ENCODE measurements at regions of chr6 and their contacts with region 1.

Region 1: DNA sequence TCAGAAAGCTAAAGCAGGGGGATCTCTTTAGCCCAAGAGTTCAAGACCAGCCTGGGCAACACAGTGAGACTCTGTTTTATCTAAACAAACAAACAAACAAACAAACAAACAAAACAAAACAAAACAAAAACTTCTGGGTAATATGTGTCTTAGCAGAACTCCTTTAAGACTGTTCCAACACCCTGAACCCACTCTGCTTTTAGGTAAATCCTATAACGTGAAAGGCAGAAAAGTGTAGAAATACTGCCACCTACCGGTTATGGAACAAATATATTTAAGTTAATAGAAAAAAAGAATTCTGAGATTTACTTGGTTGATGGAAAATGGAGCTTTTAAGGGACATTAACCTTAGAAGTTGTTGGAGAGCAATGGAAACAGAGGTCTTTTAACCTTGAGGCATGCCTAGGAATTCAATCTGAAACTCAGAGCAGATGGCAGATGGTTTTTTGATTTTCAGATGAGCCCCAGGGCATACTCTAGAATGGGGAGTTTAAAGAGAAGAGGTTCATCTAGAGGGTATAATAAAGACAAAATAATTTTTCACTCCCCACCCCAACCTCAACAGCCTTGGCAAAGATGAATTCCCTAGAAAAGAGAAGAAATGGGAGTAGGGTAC is 38.5 kb downstream of the SOD2 start:
- DNase-seq: peak; percentile 60 to 82 (median 78)
- H3K4me3 ChIP-seq: no peak overlapping the region
- H3K27ac ChIP-seq: no peak overlapping the region
- H3K4me1 ChIP-seq: no peaks in the 10 kb centered on the region
- H3K27me3 ChIP-seq: no peaks in the 10 kb centered on the region

Region 2: DNA sequence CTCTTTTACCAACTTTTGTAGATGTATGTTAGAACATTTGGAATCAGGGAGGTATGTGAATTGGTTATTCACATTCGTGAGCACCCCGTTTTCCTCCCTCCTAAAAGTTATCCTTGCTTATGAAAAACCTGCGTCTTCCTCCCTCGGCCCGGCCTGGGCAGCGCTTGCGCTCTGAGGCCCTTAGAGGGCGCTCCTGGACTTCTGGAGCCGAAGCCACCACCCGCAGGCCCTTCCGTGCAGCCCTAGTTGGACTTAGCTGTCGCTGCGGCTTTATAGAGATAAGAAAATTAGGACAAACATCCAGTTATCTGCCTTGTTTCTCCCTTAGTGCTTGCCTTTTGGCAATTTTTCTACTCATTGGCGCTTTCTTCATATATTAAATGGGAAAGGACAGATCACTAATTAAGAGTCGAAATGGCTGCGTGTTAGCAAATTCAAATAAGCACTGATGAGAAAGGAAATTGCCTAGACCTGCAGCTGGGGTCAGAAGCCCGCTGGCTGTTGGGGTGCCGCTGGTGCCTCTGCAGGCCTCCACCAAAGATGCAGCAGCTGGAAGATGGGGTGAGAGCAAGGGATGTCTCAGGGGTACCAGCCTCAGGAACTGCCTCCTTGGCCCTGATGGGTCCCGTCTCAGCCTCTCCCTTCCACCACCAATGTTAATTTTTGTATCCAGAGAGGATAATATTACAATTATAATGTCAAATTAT is 480.2 kb before region 1 on chr6:
- CTCF ChIA-PET with region 1: interaction called, 16 read pairs
- POLR2A ChIA-PET with region 1: no interaction called
- DNase-seq: peak; percentile 73 to 82 (median 81)
- H3K4me3 ChIP-seq: peak overlapping the region in 3 of 7 experiments; percentile 16 to 56 (median 56)
- H3K27ac ChIP-seq: no peak overlapping the region
- H3K4me1 ChIP-seq: peaks cover 0 to 15% (median 8%) of the 10 kb centered on the region in 4 experiments
- H3K27me3 ChIP-seq: peaks cover 19 to 58% (median 29%) of the 10 kb centered on the region in 5 experiments

Region 3: DNA sequence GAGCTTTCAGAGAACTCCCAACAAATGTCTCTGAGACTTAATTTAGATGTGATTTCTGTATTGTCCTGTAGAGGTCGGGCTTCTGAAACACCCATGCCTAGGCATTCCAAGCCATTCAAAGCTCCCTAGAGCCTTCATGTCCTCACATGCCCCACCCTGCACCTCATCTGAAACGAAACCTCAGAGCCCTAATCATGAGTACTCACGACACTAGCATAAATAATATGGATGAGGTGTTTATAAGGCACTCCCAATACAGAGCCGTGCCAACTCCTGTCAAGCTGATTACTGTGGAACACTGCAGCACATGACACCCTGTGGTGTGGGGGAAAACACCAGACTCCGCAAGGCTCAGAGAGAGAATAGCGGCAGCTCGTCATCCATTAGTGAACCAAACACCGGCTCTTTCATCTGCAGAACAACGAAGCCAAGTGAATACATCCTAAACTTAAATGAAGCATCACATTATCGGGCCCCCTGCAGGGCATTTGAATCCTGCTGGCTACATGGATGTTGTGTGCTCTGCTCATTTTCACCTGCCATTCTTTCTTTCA is 401.6 kb before region 1 on chr6:
- CTCF ChIA-PET with region 1: interaction called, 11 read pairs
- POLR2A ChIA-PET with region 1: no interaction called
- DNase-seq: peak; percentile 38 to 68 (median 62)
- H3K4me3 ChIP-seq: peak overlapping the region in 1 of 7 experiments; percentile 47
- H3K27ac ChIP-seq: no peak overlapping the region
- H3K4me1 ChIP-seq: peaks cover 0 to 2% (median 0%) of the 10 kb centered on the region in 4 experiments
- H3K27me3 ChIP-seq: no peaks in the 10 kb centered on the region

Region 4: DNA sequence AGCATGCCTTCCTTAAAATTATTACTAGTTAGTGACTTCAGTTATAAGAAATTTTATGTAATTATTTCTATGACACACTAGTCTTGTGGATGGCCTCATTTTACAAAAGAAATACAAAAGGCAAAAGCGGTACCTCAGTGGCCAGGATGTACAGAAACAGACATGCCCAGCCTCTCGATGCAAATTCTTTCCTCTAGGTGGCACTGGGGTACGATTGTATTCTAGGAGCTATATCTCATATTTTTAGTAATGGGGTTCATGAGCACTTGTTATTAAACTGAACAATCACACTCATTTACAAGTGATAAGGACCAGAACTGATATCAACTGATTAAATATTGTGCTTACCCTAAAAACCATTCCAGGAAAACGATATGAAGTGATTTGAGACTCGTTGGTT is 21.4 kb before region 1 on chr6:
- CTCF ChIA-PET with region 1: interaction called, 13 read pairs
- POLR2A ChIA-PET with region 1: no interaction called
- DNase-seq: peak in 2 of 3 donors; percentile 31
- H3K4me3 ChIP-seq: no peak overlapping the region
- H3K27ac ChIP-seq: no peak overlapping the region
- H3K4me1 ChIP-seq: peaks cover 0 to 5% (median 2%) of the 10 kb centered on the region in 4 experiments
- H3K27me3 ChIP-seq: no peaks in the 10 kb centered on the region

Region 5: GRCh38 chr6:159679091-159680077 is 24.8 kb after region 1 on chr6:
- CTCF ChIA-PET with region 1: interaction called, 20 read pairs
- POLR2A ChIA-PET with region 1: no interaction called
- DNase-seq: no peak
- H3K4me3 ChIP-seq: no peak overlapping the region
- H3K27ac ChIP-seq: no peak overlapping the region
- H3K4me1 ChIP-seq: peaks cover 3 to 36% (median 15%) of the 10 kb centered on the region in 4 experiments
- H3K27me3 ChIP-seq: no peaks in the 10 kb centered on the region

Region 6: GRCh38 chr6:160069050-160069454 is 414.5 kb after region 1 on chr6:
- CTCF ChIA-PET with region 1: no interaction called
- POLR2A ChIA-PET with region 1: no interaction called
- DNase-seq: peak; percentile 20 to 74 (median 69)
- H3K4me3 ChIP-seq: no peak overlapping the region
- H3K27ac ChIP-seq: no peak overlapping the region
- H3K4me1 ChIP-seq: peaks cover 4 to 13% (median 7%) of the 10 kb centered on the region in 4 experiments
- H3K27me3 ChIP-seq: peaks cover 0 to 36% (median 0%) of the 10 kb centered on the region in 5 experiments